Heart left ventricle (tissue), 16 donors: ENCODE measurements at regions of chr20 and their contacts with region 1.

Region 1: GRCh38 chr20:57672159-57672558 is 37.7 kb downstream of the PMEPA1 start:
- DNase-seq: peak in 4 of 5 donors; percentile 63 to 78 (median 74)
- ATAC-seq: peak; percentile 74 to 92 (median 80)
- H3K4me3 ChIP-seq: peak overlapping the region in 6 of 12 donors; percentile 2 to 32 (median 14)
- H3K27ac ChIP-seq: peak overlapping the region in 3 of 12 donors; percentile 18 to 56 (median 40)
- H3K4me1 ChIP-seq: peaks cover 0 to 72% (median 29%) of the 10 kb centered on the region in 12 donors
- H3K27me3 ChIP-seq: no peaks in the 10 kb centered on the region
- CTCF ChIP-seq: no peak
- POLR2A ChIP-seq: no peak

Region 2: DNA sequence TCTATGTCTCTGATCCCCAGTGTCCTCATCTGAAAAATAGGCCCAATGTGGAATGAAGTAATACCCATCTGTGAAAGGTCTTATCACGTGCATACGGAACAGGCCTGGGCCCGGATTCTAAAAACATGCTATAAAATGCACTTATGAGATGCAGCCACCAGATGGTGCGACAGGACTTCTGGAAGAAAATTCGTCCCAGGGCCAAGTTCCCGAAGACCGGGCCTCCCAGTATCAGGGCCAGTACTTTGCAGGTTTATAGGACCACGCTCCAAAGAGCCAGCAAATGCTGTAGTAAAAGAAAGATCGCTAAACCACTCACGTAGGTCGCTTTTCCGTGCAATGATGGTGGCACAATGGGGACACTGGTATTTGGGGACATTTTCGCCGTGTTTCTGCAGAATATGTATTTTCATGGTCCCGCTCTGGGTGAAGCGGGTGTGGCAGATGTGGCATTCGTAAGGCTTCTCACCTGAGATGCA is 157.8 kb before region 1 on chr20:
- intact Hi-C with region 1: no loop called
- DNase-seq: peak in 4 of 5 donors; percentile 54 to 75 (median 64)
- ATAC-seq: peak; percentile 63 to 91 (median 86)
- H3K4me3 ChIP-seq: no peak overlapping the region
- H3K27ac ChIP-seq: no peak overlapping the region
- H3K4me1 ChIP-seq: peaks cover 0 to 7% (median 0%) of the 10 kb centered on the region in 12 donors
- H3K27me3 ChIP-seq: peaks cover 0 to 17% (median 0%) of the 10 kb centered on the region in 9 donors
- CTCF ChIP-seq: peak; percentile 58 to 86 (median 76)
- POLR2A ChIP-seq: no peak

Region 3: GRCh38 chr20:57619051-57619834 is 52.9 kb before region 1 on chr20:
- intact Hi-C with region 1: no loop called
- DNase-seq: peak in 3 of 5 donors; percentile 59 to 65 (median 62)
- ATAC-seq: peak in 3 of 4 donors; percentile 33 to 90 (median 62)
- H3K4me3 ChIP-seq: peak overlapping the region in 3 of 12 donors; percentile 13 to 53 (median 38)
- H3K27ac ChIP-seq: peak overlapping the region in 2 of 12 donors; percentile 46 to 84
- H3K4me1 ChIP-seq: peaks cover 0 to 39% (median 0%) of the 10 kb centered on the region in 12 donors
- H3K27me3 ChIP-seq: peaks cover 0 to 27% (median 0%) of the 10 kb centered on the region in 9 donors
- CTCF ChIP-seq: no peak
- POLR2A ChIP-seq: no peak

Region 4: GRCh38 chr20:57654363-57654997 is 17.7 kb before region 1 on chr20:
- intact Hi-C with region 1: no loop called
- DNase-seq: peak in 4 of 5 donors; percentile 30 to 53 (median 39)
- ATAC-seq: peak; percentile 45 to 64 (median 54)
- H3K4me3 ChIP-seq: no peak overlapping the region
- H3K27ac ChIP-seq: no peak overlapping the region
- H3K4me1 ChIP-seq: peaks cover 0 to 18% (median 5%) of the 10 kb centered on the region in 12 donors
- H3K27me3 ChIP-seq: no peaks in the 10 kb centered on the region
- CTCF ChIP-seq: peak; percentile 85 to 94 (median 90)
- POLR2A ChIP-seq: no peak

Region 5: DNA sequence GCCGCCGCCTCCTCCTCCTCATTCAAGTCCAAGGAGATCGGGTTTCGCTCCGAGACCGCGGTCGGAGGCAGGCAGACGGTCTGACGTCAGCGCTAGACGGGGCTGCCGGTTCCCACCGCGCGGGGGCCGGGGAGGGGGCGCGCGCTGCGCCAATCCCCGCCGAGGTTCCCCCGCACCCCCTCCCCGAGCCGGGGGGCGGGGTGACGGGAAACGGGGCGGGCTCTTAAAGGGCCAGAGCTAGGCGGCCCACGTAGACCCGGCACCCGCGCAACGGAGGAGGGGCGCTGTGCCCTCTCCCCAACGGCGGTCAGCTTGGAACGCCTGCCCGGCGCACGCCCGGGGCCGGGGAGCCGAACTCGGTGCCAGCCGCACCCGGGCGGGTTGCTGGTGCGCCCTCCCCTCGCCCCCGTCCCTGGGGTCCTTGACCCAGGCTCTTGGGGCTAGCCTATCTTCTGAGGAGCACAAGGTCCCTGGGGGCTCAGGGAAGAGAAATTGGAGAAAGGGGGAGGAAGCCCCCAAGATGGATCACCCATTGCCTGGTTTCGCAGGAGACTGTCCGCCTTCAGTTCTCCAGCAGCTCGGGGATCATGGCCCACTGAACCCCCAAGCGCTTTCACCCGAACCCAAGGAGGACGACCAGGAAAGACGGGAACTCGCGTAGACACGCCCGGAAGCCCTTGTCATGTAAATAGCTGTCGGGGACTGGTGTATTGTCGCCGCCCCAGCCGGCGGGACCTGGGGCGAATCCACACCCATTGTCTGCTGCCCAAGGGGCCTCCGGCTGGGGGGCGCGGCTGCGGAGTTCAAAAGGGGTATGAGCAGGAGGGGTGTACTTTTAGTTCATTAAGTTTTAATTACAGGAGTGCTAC is 38.0 kb after region 1 on chr20 and contains the start of gene PMEPA1:
- intact Hi-C with region 1: loop called in 1 of 10 experiments (anchors 5 kb)
- DNase-seq: peak; percentile 96 to 97 (median 96)
- ATAC-seq: peak; percentile 81 to 93 (median 91)
- H3K4me3 ChIP-seq: peak within 1 kb of the TSS; percentile 65 to 96 (median 77)
- H3K27ac ChIP-seq: peak within 1 kb of the TSS; percentile 63 to 98 (median 93)
- H3K4me1 ChIP-seq: peaks cover 0 to 74% (median 38%) of the 10 kb centered on the region in 12 donors
- H3K27me3 ChIP-seq: peaks cover 0 to 3% (median 0%) of the 10 kb centered on the region in 9 donors
- CTCF ChIP-seq: peak in 4 of 12 donors; percentile 8 to 26 (median 18)
- POLR2A ChIP-seq: peak in 1 of 2 donors; percentile 94
- total RNA-seq, gene PMEPA1: 25.1 to 91.4 (median 30.0) TPM